Calu3 (cell line): ENCODE measurements at regions of chr18 and their contacts with region 1.

Region 1: DNA sequence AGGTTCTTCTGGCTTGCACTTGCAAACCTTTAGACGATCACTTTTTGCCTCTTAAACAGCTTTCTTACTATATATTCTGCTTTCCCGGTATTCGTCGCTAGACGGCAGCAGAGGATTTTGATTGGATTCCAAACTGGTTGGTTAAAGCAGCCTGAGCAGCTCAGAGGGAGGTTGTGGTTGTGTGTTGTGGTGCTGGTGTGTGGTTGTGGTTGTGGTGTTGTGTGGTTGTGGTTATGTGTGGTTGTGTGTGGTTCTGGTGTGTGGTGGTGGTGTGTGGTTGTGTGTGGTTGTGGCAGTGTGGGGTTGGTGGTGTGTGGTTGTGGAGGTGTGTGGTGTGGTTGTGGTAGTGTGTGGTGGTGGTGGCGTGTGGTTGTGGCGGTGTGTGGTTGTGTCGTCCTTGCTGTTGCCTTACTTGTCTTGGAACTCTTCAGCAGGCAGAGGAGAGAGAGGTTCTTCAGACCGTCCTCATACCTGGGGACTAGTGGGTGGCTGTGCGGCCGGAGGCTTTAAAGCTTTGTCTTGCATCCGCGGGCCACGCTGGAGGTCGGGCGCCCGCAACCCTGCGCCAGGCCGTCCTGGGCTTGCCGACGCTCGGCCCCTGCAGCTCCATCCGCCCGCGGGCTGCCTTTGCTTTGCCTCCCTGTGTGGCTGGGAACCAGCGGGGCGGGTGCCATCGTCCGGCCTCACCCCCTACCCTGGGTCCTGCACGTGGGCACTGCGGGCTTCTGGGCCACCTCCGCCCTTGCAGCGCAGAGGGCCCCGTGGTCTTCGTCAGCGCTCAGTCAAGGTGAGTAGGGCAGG is 190.8 kb downstream of the ARHGAP28 start:
- DNase-seq: peak; percentile 74
- H3K4me3 Mint-ChIP-seq: no peak overlapping the region
- H3K27ac Mint-ChIP-seq: no peak overlapping the region
- H3K4me1 Mint-ChIP-seq: no peaks in the 10 kb centered on the region
- H3K27me3 Mint-ChIP-seq: peaks cover 84% of the 10 kb centered on the region
- CTCF ChIP-seq: peak; percentile 83

Region 2: DNA sequence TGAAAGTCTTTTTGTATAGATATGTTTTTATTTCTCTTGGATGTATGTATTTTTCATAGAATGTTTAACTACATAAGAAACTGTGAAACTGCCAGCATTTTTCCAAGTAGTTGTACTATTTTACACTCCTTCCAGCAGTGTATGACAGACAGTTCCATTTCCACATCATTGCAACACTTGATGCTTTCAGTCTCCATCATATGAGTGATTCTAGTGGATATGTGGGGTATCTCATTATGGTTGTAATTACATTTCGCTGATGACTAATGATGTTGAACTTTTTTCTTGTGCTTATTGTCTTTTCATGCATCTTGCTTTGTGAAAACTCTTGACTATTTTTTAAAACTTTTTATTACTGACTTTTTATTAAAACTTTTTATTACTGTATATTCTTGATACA is 89.4 kb before region 1 on chr18:
- CTCF ChIA-PET with region 1: no interaction called
- intact Hi-C with region 1: no loop called
- DNase-seq: no peak
- H3K4me3 Mint-ChIP-seq: no peak overlapping the region
- H3K27ac Mint-ChIP-seq: no peak overlapping the region
- H3K4me1 Mint-ChIP-seq: no peaks in the 10 kb centered on the region
- H3K27me3 Mint-ChIP-seq: peaks cover 30% of the 10 kb centered on the region
- CTCF ChIP-seq: no peak

Region 3: GRCh38 chr18:6983366-6983765 is 63.1 kb after region 1 on chr18:
- CTCF ChIA-PET with region 1: interaction called, 3 read pairs
- intact Hi-C with region 1: loop called (anchors 1 kb)
- DNase-seq: no peak
- H3K4me3 Mint-ChIP-seq: no peak overlapping the region
- H3K27ac Mint-ChIP-seq: no peak overlapping the region
- H3K4me1 Mint-ChIP-seq: no peaks in the 10 kb centered on the region
- H3K27me3 Mint-ChIP-seq: peaks cover 70% of the 10 kb centered on the region
- CTCF ChIP-seq: no peak

Region 4: DNA sequence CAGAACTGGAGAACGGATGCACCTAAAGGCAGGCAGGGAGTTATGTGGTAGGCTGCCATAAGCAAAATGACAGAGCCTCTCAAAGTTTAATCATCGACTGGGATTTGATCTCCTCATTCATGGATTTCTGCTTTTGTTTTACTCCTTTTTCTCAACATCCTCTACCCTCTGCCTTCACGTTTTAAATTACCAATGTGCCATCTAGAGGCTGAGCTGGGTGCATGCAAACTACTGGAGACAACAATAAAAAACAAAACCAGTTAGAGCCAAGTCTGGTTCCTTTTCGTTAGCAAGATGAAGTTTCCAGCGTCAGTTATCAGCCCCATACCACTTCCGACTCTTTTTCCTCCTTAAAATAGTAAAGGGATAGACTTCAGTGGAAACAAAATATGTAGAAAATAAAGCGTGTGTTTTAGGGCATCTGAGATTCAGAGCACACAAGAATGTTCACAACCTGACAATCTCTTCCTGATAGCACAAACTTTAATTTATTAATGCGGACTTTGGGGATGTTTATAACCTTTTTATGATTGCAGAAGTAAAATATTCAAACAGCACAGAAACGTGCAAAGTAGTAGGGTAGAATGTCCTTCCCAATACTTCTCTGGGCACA is 80.3 kb after region 1 on chr18:
- CTCF ChIA-PET with region 1: interaction called, 14 read pairs
- intact Hi-C with region 1: loop called (anchors 1 kb)
- DNase-seq: no peak
- H3K4me3 Mint-ChIP-seq: no peak overlapping the region
- H3K27ac Mint-ChIP-seq: no peak overlapping the region
- H3K4me1 Mint-ChIP-seq: peaks cover 9% of the 10 kb centered on the region
- H3K27me3 Mint-ChIP-seq: peaks cover 57% of the 10 kb centered on the region
- CTCF ChIP-seq: peak; percentile 18

Region 5: DNA sequence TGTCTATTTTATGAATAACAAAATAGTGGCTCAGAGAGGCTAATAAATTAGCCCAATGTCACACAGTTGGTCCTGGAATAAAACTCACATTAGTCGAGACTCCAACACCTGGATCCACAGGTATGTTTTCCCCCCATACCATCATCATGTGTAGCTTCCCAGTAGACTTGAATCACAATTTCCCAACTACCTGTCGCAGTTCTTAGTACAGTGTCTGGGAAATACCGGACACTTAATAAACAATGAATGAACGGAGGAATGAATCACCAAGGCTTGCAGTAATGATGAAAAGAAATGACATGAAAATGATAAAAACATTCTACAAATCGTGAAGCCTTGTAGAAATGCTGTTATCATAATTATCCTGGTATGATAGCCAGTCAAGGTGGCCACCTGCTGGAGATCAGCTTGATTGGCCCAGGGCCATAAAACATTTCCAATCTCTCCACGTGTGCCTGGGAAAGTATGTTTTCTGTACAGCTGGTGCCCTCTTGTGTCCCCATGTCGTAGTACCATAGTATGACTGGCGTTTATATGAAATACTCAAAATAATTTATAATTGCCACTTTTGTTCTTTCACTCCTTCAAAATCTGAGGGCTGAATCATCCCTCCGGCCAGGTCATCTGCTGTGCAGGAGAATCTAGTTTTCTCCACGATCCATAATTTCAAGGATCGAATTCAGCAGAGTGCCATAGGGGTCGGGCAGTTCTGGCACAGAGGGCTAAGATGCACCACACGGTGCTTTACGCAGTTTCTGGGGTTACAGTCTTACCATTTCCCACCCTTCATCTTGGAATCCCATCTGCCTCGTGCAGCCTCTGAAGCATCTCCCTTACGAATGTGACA is 101.9 kb after region 1 on chr18:
- CTCF ChIA-PET with region 1: interaction called, 32 read pairs
- intact Hi-C with region 1: loop called (anchors 1 kb)
- DNase-seq: peak; percentile 71
- H3K4me3 Mint-ChIP-seq: no peak overlapping the region
- H3K27ac Mint-ChIP-seq: no peak overlapping the region
- H3K4me1 Mint-ChIP-seq: no peaks in the 10 kb centered on the region
- H3K27me3 Mint-ChIP-seq: peaks cover 33% of the 10 kb centered on the region
- CTCF ChIP-seq: peak; percentile 86

Region 6: GRCh38 chr18:7177116-7177744 is 256.9 kb after region 1 on chr18:
- CTCF ChIA-PET with region 1: interaction called, 25 read pairs
- intact Hi-C with region 1: loop called (anchors 2 kb)
- DNase-seq: peak; percentile 53
- H3K4me3 Mint-ChIP-seq: no peak overlapping the region
- H3K27ac Mint-ChIP-seq: no peak overlapping the region
- H3K4me1 Mint-ChIP-seq: no peaks in the 10 kb centered on the region
- H3K27me3 Mint-ChIP-seq: peaks cover 63% of the 10 kb centered on the region
- CTCF ChIP-seq: peak; percentile 39